Mammary epithelial cell (primary cell): ENCODE measurements at regions of chr4 and their contacts with region 1.

Region 1: GRCh38 chr4:41160012-41160789 is 54.1 kb downstream of the APBB2 start:
- DNase-seq: peak; percentile 97
- H3K4me3 ChIP-seq: no peak overlapping the region
- H3K27ac ChIP-seq: peak overlapping the region; percentile 88
- H3K4me1 ChIP-seq: peaks cover 69% of the 10 kb centered on the region
- H3K27me3 ChIP-seq: no peaks in the 10 kb centered on the region
- CTCF ChIP-seq: no peak

Region 2: GRCh38 chr4:40992472-40993295 is 167.5 kb before region 1 on chr4:
- CTCF ChIA-PET with region 1: no interaction called
- dilution Hi-C with region 1: no loop called
- in situ Hi-C with region 1: no loop called
- intact Hi-C with region 1: loop called (anchors 5 kb)
- DNase-seq: peak; percentile 79
- H3K4me3 ChIP-seq: no peak overlapping the region
- H3K27ac ChIP-seq: peak overlapping the region; percentile 97
- H3K4me1 ChIP-seq: peaks cover 57% of the 10 kb centered on the region
- H3K27me3 ChIP-seq: no peaks in the 10 kb centered on the region
- CTCF ChIP-seq: no peak

Region 3: DNA sequence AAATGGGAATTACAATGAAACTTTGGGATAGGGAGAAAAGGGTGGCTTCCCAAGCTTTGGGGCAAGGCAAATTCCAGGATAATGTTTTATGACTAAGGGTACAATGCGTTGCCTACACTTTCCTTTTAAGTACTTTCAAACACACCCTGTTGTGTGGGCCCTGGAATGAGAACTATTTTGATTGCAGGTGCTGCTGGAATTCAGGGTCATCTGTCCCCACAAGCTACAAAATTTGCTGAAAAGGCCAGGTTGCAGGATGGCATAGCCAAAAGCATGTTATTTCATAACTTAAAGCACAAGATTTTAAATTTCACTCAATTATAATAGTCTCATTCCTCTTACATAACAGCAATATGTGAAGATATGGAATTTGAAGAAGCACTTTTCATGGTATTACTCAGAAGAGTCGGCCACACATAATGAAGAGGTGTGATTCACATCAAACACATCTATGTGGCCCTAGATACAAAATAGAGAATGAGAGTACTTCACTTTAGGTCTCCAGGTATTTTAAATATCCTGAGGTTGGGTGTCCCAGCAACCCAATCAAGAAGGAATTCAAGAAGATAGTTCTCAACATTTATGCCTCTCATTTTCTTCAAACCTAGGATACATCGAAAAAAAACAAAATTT is 35.2 kb before region 1 on chr4:
- CTCF ChIA-PET with region 1: interaction called, 3 read pairs
- dilution Hi-C with region 1: no loop called
- in situ Hi-C with region 1: no loop called
- intact Hi-C with region 1: loop called (anchors 1 kb)
- DNase-seq: peak; percentile 63
- H3K4me3 ChIP-seq: no peak overlapping the region
- H3K27ac ChIP-seq: peak overlapping the region; percentile 96
- H3K4me1 ChIP-seq: peaks cover 43% of the 10 kb centered on the region
- H3K27me3 ChIP-seq: no peaks in the 10 kb centered on the region
- CTCF ChIP-seq: no peak

Region 4: GRCh38 chr4:41143311-41144039 is 16.7 kb before region 1 on chr4:
- CTCF ChIA-PET with region 1: interaction called, 3 read pairs
- dilution Hi-C with region 1: no loop called
- in situ Hi-C with region 1: no loop called
- intact Hi-C with region 1: loop called (anchors 1 kb)
- DNase-seq: peak; percentile 75
- H3K4me3 ChIP-seq: peak overlapping the region in 2 of 3 experiments; percentile 2 to 19
- H3K27ac ChIP-seq: peak overlapping the region; percentile 98
- H3K4me1 ChIP-seq: peaks cover 69% of the 10 kb centered on the region
- H3K27me3 ChIP-seq: no peaks in the 10 kb centered on the region
- CTCF ChIP-seq: no peak

Region 5: DNA sequence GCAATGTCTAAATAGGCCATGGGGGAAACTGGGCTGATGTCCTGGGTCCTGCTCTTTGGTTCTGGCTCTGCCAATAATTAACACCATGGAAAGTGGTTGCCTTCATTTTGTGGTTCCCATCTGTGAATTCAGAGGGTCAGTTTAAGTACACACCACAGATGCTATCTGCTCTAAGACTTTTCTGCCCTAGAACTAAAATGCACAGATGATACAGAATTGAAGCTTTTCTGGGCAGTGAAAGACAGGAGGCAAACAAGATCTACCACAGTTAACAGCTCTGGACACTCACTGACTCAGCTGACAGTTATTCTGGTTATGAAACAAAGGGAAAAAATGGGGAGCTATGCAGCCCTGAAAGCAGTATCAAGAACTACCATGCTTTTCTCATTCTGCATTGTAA is 16.8 kb after region 1 on chr4:
- CTCF ChIA-PET with region 1: interaction called, 8 read pairs
- dilution Hi-C with region 1: no loop called
- in situ Hi-C with region 1: no loop called
- intact Hi-C with region 1: loop called (anchors 2 kb)
- DNase-seq: peak; percentile 72
- H3K4me3 ChIP-seq: no peak overlapping the region
- H3K27ac ChIP-seq: peak overlapping the region; percentile 9
- H3K4me1 ChIP-seq: peaks cover 40% of the 10 kb centered on the region
- H3K27me3 ChIP-seq: no peaks in the 10 kb centered on the region
- CTCF ChIP-seq: peak; percentile 31 to 43

Region 6: DNA sequence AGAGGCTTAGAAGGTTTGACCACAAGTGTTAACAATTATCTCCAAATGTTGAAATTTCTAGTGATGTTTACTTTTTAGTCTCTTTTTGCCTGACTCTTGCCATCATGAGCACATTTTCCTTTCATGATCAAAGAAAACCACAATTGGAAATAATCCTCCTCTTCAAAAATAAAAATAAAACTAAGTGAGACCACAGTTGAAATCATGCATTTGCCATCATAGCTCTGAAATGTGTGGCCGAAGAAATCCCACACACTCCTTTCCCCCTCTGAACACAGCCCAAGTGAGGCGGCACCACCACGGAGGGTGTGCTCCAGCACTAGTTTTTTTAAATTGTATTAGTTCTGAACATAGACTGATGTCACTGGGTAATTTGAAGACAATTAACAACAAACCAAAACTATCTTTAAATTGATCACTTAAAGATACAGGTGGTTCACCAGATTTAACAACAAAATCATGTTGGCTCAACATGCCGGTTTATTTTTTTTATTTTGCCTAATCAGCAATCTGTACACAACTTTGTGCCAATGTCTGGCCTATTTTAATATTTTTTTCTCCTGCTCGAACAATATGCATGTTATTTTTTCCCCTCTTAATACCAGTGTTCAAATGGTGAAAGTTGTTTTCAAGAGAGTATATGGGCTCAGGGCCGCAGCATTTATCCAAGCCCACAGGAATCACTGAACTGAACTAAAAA is 36.6 kb after region 1 on chr4:
- CTCF ChIA-PET with region 1: no interaction called
- dilution Hi-C with region 1: no loop called
- in situ Hi-C with region 1: no loop called
- intact Hi-C with region 1: no loop called
- DNase-seq: no peak
- H3K4me3 ChIP-seq: no peak overlapping the region
- H3K27ac ChIP-seq: no peak overlapping the region
- H3K4me1 ChIP-seq: peaks cover 10% of the 10 kb centered on the region
- H3K27me3 ChIP-seq: no peaks in the 10 kb centered on the region
- CTCF ChIP-seq: no peak

Region 7: GRCh38 chr4:41207305-41207831 is 47.2 kb after region 1 on chr4:
- CTCF ChIA-PET with region 1: no interaction called
- dilution Hi-C with region 1: no loop called
- in situ Hi-C with region 1: no loop called
- intact Hi-C with region 1: loop called (anchors 2 kb)
- DNase-seq: no peak
- H3K4me3 ChIP-seq: no peak overlapping the region
- H3K27ac ChIP-seq: no peak overlapping the region
- H3K4me1 ChIP-seq: peaks cover 31% of the 10 kb centered on the region
- H3K27me3 ChIP-seq: no peaks in the 10 kb centered on the region
- CTCF ChIP-seq: no peak